Left ventricle myocardium inferior (tissue), 1 donor: ENCODE measurements at regions of chr11 and their contacts with region 1.

Region 1: DNA sequence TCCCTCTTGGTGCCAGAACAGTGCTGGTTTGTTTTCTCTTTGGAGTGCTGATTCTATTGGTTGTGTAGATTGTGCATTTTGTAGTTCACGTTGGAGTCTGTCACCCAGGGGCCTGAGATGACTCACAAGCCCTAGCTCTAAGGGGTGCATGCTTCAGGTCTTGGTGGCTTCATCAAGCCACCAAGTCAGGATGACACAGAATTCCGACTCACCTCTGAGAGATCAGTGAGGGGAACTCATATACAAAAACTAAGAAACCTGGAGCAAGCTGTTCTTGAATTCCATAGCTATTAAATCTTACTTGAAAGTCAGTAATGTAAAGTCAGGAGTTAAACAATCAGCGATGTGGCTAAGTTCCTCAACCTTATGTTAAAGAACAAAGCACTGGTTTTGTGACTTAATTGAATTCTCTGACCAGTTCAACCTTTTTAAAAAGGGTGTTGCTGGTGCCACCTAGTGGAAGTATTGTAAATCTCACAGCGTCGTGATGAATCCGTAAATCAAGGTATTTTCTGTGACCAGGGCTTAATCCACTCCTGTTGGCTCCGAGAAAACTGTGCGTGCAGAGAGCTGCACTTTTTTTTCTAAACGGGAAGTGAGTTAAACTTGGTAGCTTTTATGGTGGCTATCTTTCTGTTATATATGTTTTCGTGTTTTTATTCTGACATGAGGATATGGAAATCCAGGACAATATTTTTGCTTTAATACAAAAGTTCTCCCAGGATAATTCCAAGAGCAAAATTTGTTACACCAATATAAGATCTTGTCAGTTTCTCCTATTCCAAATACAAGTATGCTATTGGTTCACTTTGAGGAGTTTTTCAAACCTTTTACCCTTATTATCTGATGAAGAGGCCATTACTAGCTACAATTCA is 14.6 kb downstream of the MMP13 start:
- DNase-seq: no peak
- H3K4me3 ChIP-seq: no peak overlapping the region
- H3K27ac ChIP-seq: no peak overlapping the region
- H3K4me1 ChIP-seq: no peaks in the 10 kb centered on the region
- H3K27me3 ChIP-seq: peaks cover under 1% of the 10 kb centered on the region
- CTCF ChIP-seq: peak; percentile 85

Region 2: DNA sequence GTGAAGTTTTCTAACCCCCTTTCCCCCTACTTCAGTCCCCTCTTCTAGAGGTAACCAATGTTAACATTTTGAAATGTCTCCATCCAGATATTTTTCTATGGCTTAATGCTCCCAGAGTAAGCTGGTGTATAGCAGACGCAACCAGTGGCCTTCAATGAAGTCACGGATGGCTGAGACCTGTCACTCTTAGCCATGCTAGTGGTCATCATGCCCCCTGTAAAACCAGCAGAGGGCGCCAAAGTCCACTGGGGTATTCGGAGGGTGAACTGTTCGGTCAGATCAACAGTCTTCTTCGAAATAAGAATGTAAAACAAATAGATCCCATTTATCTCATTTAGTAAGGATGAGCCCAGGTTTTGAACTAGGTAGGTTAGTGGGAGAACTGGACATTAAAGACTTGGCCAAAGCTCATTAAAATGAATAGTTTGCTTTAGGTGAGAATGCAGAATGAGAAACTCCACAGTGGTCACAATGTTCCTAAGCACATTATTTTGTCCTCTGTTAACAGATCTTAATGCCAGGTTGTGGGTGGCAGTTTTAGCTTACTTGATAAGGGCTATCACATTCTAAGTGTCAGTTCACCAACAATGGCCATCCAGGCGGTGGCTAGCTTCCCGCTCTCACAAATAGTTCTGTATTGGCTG is 207.6 kb before region 1 on chr11:
- intact Hi-C with region 1: loop called (anchors 5 kb)
- DNase-seq: peak; percentile 19
- H3K4me3 ChIP-seq: no peak overlapping the region
- H3K27ac ChIP-seq: no peak overlapping the region
- H3K4me1 ChIP-seq: no peaks in the 10 kb centered on the region
- H3K27me3 ChIP-seq: no peaks in the 10 kb centered on the region
- CTCF ChIP-seq: peak; percentile 67